ENCODE measurements at regions of chr4 and their contacts with region 1.

Region 1: DNA sequence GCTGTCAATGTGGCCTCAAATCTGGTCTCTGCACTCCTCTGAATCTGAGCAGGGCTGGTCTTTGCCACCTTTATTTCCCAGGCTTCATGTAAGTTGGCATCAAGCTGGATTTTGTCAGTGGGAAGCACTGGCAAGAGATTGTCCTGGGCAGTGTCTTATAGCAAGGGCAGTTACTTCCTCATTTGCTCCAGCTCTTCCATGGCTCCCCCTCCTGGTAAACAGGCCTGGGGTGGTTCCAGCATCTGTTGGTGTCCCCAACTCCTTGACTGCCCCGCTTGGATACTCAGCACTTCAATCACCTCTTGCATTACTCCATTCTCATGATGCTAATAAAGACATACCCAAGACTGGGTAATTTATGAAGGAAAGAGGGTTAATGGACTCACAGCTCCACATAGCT is 15.0 kb upstream of the REST start:
- DNase-seq: no peak
- ATAC-seq: no peak
- H3K4me3 ChIP-seq: no peak overlapping the region
- H3K4me3 Mint-ChIP-seq: no peak overlapping the region
- H3K27ac ChIP-seq: no peak overlapping the region
- H3K27ac Mint-ChIP-seq: no peak overlapping the region
- H3K4me1 ChIP-seq: no peaks in the 10 kb centered on the region
- H3K4me1 Mint-ChIP-seq: no peaks in the 10 kb centered on the region
- H3K27me3 ChIP-seq: no peaks in the 10 kb centered on the region
- H3K27me3 Mint-ChIP-seq: peaks cover 0 to 16% (median 0%) of the 10 kb centered on the region in 5 donors

Region 2: DNA sequence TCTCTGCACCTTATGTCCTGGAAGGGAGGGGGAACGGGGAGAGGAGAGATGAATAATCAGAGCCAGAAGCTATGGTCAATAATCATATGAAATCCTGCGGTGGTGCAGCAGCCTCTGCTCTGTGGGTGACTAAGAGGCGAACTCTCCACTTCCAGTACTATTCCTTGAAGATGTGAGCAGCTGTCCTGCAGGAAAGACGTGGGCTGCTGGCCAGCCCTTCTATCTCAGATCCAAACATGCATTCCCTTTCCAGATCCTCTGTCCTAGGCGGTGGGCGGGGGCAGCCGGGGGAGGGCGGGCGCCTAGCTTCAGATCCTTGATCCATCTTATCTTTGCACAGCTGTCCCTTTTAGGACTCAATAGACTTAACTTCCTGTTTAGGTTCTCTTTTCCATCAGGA is 105.7 kb before region 1 on chr4:
- CTCF ChIA-PET with region 1: interaction called, 11 read pairs
- POLR2A ChIA-PET with region 1: no interaction called
- intact Hi-C with region 1: no loop called
- DNase-seq: no peak
- ATAC-seq: no peak
- H3K4me3 ChIP-seq: no peak overlapping the region
- H3K4me3 Mint-ChIP-seq: no peak overlapping the region
- H3K27ac ChIP-seq: no peak overlapping the region
- H3K27ac Mint-ChIP-seq: peak overlapping the region in 1 of 9 donors; percentile 30
- H3K4me1 ChIP-seq: no peaks in the 10 kb centered on the region
- H3K4me1 Mint-ChIP-seq: peaks cover 0 to 3% (median 0%) of the 10 kb centered on the region in 7 donors
- H3K27me3 ChIP-seq: no peaks in the 10 kb centered on the region
- H3K27me3 Mint-ChIP-seq: peaks cover 0 to 13% (median 0%) of the 10 kb centered on the region in 5 donors

Region 3: GRCh38 chr4:57023104-57023503 is 130.4 kb after region 1 on chr4:
- CTCF ChIA-PET with region 1: no interaction called
- POLR2A ChIA-PET with region 1: no interaction called
- intact Hi-C with region 1: no loop called
- DNase-seq: no peak
- ATAC-seq: no peak
- H3K4me3 ChIP-seq: no peak overlapping the region
- H3K4me3 Mint-ChIP-seq: no peak overlapping the region
- H3K27ac ChIP-seq: no peak overlapping the region
- H3K27ac Mint-ChIP-seq: peak overlapping the region in 2 of 9 donors; percentile 1 to 34
- H3K4me1 ChIP-seq: no peaks in the 10 kb centered on the region
- H3K4me1 Mint-ChIP-seq: peaks cover 0 to 10% (median 3%) of the 10 kb centered on the region in 7 donors
- H3K27me3 ChIP-seq: no peaks in the 10 kb centered on the region
- H3K27me3 Mint-ChIP-seq: no peaks in the 10 kb centered on the region

Measured in naive thymus-derived CD4-positive, alpha-beta T cell (primary cell).